ENCODE measurements at regions of chr12 and their contacts with region 1.

Region 1: DNA sequence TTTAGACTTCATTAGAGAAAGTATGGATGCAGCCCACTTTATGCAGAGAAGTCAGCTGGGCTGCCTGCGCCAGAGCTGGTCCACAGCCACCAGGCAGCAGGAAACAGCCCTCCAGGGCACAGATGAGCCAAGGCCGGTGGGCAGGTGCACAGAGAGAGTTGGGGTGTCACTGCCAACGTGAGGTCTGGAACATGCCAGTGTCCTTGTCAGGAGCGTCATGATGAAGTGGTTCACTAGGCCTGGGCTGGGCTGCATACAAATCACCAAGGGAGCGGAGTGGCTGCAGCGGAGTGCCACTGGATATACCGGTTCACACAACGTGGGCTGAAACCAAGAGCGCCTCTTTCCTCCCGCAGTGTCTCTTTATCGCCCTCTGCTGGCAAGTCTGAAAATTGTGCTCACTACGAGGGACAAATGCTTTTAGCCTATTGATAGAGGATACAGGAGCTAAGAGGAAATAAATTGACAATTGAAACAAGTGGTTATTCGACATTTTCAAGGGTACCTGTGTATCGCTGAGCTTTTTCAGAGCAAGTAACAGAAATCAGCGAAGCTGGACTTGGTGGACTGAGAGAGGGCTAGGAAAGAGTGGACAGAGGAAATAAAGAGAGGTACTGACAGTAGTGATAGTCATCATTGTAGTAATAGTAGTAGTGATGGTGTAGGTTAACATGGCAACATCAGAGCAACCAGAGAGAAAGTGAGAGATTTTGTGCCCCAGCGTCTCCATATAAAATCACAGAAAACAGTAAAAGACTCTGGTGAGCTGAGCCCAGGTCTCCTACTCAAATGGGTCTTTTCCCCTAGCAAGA is 52.0 kb upstream of the ITPR2 start:
- DNase-seq: peak; percentile 57 to 88
- ATAC-seq: peak; percentile 79 to 95 (median 94)
- H3K4me3 ChIP-seq: peak overlapping the region in 1 of 10 donors; percentile 6
- H3K27ac ChIP-seq: no peak overlapping the region
- H3K4me1 ChIP-seq: peaks cover 0 to 10% (median 4%) of the 10 kb centered on the region in 9 donors
- H3K27me3 ChIP-seq: no peaks in the 10 kb centered on the region
- CTCF ChIP-seq: peak; percentile 89 to 99 (median 97)

Region 2: GRCh38 chr12:26853303-26854030 is 31.5 kb before region 1 on chr12:
- intact Hi-C with region 1: loop called (anchors 1 to 5 kb)
- DNase-seq: peak; percentile 61 to 65
- ATAC-seq: peak in 7 of 8 donors; percentile 73 to 87 (median 81)
- H3K4me3 ChIP-seq: no peak overlapping the region
- H3K27ac ChIP-seq: no peak overlapping the region
- H3K4me1 ChIP-seq: peaks cover 0 to 25% (median 11%) of the 10 kb centered on the region in 9 donors
- H3K27me3 ChIP-seq: no peaks in the 10 kb centered on the region
- CTCF ChIP-seq: peak; percentile 76 to 92 (median 88)

Region 3: GRCh38 chr12:28824849-28825248 is 1939.9 kb after region 1 on chr12:
- intact Hi-C with region 1: loop called in 1 of 10 experiments (anchors 5 kb)
- DNase-seq: no peak
- ATAC-seq: peak in 6 of 8 donors; percentile 27 to 59 (median 55)
- H3K4me3 ChIP-seq: no peak overlapping the region
- H3K27ac ChIP-seq: peak overlapping the region in 2 of 10 donors; percentile 13 to 38
- H3K4me1 ChIP-seq: peaks cover 0 to 8% (median 0%) of the 10 kb centered on the region in 9 donors
- H3K27me3 ChIP-seq: no peaks in the 10 kb centered on the region
- CTCF ChIP-seq: no peak